ENCODE measurements at regions of chr6 and their contacts with region 1.

Region 1: DNA sequence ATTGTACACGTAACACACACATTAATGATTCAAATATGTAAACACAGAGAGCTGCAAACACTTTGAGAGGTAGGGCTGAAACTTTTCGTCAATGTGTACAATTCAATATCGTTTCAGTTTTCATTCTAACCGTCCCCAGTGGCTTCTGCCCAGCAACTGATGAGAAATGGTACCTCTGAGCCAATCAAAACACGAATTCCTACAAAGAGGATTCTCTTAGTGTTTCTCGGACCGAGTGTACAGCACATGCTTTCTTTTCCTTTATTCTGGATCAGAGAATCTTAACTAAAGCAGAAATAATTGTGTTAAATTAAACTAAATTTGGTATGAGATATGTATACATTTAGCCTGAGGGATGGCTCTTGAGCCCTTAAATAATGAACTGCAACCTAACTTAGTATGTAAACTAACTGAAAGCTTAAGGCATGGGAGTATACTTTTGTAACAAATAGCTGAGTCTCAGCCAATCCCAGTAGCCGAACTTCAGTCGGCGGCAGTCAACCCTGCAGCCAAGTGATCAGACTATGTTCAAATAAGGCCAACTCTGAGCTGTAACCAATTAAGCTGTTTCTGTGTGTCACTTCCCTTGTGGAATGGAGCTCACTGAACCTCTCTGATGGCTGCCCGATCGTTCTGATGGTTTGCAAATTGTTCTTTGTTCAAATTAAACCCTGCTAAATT is 16.1 kb downstream of the BTN2A1 start:
- DNase-seq: peak; percentile 86
- H3K4me3 Mint-ChIP-seq: peak overlapping the region; percentile 99
- H3K27ac Mint-ChIP-seq: peak overlapping the region; percentile 100
- H3K4me1 Mint-ChIP-seq: peaks cover 36% of the 10 kb centered on the region
- H3K27me3 Mint-ChIP-seq: no peaks in the 10 kb centered on the region

Region 2: GRCh38 chr6:26342106-26343004 is 131.5 kb before region 1 on chr6:
- CTCF ChIA-PET with region 1: interaction called, 11 read pairs
- POLR2A ChIA-PET with region 1: interaction called, 4 read pairs
- DNase-seq: peak; percentile 39
- H3K4me3 Mint-ChIP-seq: peak overlapping the region; percentile 80
- H3K27ac Mint-ChIP-seq: peak overlapping the region; percentile 56
- H3K4me1 Mint-ChIP-seq: peaks cover 33% of the 10 kb centered on the region
- H3K27me3 Mint-ChIP-seq: peaks cover 15% of the 10 kb centered on the region

Region 3: GRCh38 chr6:26421259-26422144 is 52.4 kb before region 1 on chr6:
- CTCF ChIA-PET with region 1: no interaction called
- POLR2A ChIA-PET with region 1: no interaction called
- DNase-seq: peak; percentile 59
- H3K4me3 Mint-ChIP-seq: no peak overlapping the region
- H3K27ac Mint-ChIP-seq: peak overlapping the region; percentile 59
- H3K4me1 Mint-ChIP-seq: peaks cover 19% of the 10 kb centered on the region
- H3K27me3 Mint-ChIP-seq: no peaks in the 10 kb centered on the region

Region 4: GRCh38 chr6:26439657-26440056 is 34.2 kb before region 1 on chr6:
- CTCF ChIA-PET with region 1: no interaction called
- POLR2A ChIA-PET with region 1: interaction called, 20 read pairs
- DNase-seq: no peak
- H3K4me3 Mint-ChIP-seq: peak overlapping the region; percentile 97
- H3K27ac Mint-ChIP-seq: peak overlapping the region; percentile 86
- H3K4me1 Mint-ChIP-seq: peaks cover 39% of the 10 kb centered on the region
- H3K27me3 Mint-ChIP-seq: no peaks in the 10 kb centered on the region

Region 5: GRCh38 chr6:26520853-26521599 is 47.1 kb after region 1 on chr6:
- CTCF ChIA-PET with region 1: no interaction called
- POLR2A ChIA-PET with region 1: interaction called, 32 read pairs
- DNase-seq: peak; percentile 86
- H3K4me3 Mint-ChIP-seq: peak overlapping the region; percentile 75
- H3K27ac Mint-ChIP-seq: peak overlapping the region; percentile 88
- H3K4me1 Mint-ChIP-seq: peaks cover 32% of the 10 kb centered on the region
- H3K27me3 Mint-ChIP-seq: no peaks in the 10 kb centered on the region

Region 6: DNA sequence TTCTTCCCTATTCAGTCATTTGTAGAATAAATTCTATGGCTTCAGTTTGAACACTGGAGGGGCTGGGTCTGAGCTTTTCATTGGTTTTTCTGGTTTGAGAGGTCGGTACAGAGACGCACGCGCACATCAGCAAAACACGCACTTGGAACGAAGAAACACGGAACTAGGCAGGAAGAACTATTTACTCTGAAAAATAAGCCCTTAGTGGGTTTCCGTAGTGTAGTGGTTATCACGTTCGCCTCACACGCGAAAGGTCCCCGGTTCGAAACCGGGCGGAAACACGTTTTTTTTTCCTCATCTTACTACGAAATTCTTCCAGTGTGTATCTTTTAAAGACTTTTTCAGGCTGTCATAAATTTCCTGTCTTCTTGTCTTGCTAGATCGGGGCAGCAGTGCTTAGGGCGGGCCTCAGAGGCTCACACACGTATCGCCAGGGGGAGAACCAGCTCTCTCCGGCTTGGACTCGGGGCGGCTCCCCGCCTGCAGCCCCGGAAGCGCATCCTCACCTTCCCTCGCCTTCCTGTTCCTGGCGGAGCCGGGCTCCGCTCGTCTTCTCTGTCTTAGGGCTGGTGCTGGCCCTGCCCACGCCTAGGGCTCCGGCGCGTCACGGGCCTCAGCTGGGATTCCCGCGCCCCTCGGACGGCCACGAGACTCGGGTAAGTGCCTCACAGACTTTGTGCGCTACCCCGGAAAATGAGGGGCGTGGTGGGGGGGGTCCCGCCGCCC is 64.1 kb after region 1 on chr6 and contains the start of gene HMGN4:
- CTCF ChIA-PET with region 1: interaction called, 7 read pairs
- POLR2A ChIA-PET with region 1: interaction called, 52 read pairs
- DNase-seq: peak; percentile 82
- H3K4me3 Mint-ChIP-seq: peak within 1 kb of the TSS; percentile 94
- H3K27ac Mint-ChIP-seq: peak within 1 kb of the TSS; percentile 98
- H3K4me1 Mint-ChIP-seq: peaks cover 63% of the 10 kb centered on the region
- H3K27me3 Mint-ChIP-seq: no peaks in the 10 kb centered on the region
- total RNA-seq, gene HMGN4: 108 to 109 TPM

Measured in activated CD4-positive, alpha-beta memory T cell treated with anti-CD3 and anti-CD28 coated beads, Interleukin-2, amount 10 ng/mL, durations not matched to agents 7 days and 5 days (primary cell).